ENCODE measurements at regions of chr9 and their contacts with region 1.

Region 1: DNA sequence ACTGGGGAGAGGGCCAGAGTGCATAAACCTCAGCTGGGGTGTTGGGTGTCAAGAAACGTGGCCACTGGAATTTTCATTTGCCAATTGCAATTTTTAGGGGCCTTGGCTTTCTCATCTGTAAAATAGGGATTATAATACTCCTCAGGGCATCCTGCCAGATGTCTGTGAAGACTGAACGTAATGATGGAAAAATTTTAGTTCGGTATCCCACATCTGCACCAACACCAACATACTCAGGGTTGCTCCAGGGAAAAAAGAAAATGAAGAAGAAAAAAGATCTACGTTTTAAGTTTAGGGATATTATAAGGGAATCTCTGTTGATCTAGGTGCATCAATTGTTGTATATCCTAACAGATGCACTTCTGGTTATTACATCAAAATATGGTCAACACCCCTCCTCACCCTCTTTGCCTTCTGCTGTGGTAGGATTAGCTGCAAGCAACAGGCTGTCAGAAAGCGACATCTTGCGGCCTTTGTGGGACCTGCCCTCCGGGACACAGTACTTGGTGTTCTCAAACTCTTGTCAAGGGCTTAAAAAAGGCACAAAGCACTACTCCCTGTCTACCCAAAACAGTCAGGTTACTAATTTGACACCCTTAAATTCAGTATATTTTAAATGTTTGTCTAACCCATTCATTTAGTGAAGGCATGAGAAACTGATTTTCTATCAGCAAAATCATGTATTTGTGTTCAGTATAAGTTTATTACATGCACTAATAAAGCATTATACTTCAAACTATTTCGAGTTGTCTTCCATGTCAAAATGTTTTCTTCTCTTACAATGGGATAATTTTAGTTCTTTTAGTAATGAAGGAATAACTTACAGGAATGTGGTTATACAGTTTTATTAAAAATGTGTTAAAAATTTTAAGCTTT is 8.3 kb upstream of the TBC1D2 start:
- DNase-seq: peak; percentile 69 to 88 (median 71)
- H3K4me3 ChIP-seq: no peak overlapping the region
- H3K4me3 Mint-ChIP-seq: peak overlapping the region in 1 of 7 donors; percentile 5
- H3K27ac ChIP-seq: no peak overlapping the region
- H3K27ac Mint-ChIP-seq: peak overlapping the region in 1 of 8 donors; percentile 70
- H3K4me1 ChIP-seq: no peaks in the 10 kb centered on the region
- H3K4me1 Mint-ChIP-seq: peaks cover 0 to 2% (median 0%) of the 10 kb centered on the region in 3 donors
- H3K27me3 ChIP-seq: no peaks in the 10 kb centered on the region
- H3K27me3 Mint-ChIP-seq: peaks cover 2 to 14% of the 10 kb centered on the region in 2 donors

Region 2: DNA sequence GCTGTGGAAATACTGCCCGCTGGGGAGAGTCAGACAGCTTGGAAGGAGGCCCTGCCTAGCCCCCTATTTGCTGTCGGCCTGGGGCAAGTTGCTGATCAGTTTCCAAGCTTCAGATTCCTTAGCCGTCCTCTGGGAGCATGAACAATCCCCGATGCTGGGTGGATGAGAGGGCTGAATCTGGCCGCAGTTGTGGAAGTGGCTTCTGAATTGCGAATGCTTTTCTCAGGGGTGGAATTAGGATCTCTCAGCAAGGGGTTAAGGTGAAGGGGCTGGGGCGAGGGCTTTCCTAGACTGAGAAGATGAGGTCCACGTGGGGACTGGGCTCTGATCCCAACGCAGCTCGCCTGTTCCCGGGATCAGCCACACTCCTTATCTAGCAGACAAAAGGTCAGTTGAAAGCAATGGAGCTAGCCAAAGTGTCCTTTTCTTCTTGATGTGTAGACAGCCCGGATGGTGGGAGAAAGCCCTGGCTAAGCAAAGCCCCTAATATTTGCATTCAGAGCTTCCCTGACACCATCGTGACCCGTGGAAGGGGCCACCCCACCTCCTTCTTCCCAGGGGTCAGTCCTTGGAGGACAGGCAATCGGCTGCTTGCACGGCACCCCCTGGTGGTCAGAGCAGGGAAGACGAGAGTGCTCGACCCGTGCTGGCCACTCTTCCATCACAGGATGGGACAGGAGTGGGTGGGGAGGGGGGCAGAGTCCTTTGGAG is 734.9 kb after region 1 on chr9:
- CTCF ChIA-PET with region 1: no interaction called
- POLR2A ChIA-PET with region 1: interaction called, 21 read pairs
- DNase-seq: peak; percentile 29 to 67 (median 45)
- H3K4me3 ChIP-seq: no peak overlapping the region
- H3K4me3 Mint-ChIP-seq: no peak overlapping the region
- H3K27ac ChIP-seq: no peak overlapping the region
- H3K27ac Mint-ChIP-seq: peak overlapping the region in 1 of 8 donors; percentile 63
- H3K4me1 ChIP-seq: peaks cover 19% of the 10 kb centered on the region
- H3K4me1 Mint-ChIP-seq: peaks cover 13 to 24% (median 23%) of the 10 kb centered on the region in 3 donors
- H3K27me3 ChIP-seq: no peaks in the 10 kb centered on the region
- H3K27me3 Mint-ChIP-seq: peaks cover 15 to 19% of the 10 kb centered on the region in 2 donors

Measured in CD8-positive, alpha-beta memory T cell (primary cell).